Mammary epithelial cell (primary cell): ENCODE measurements at regions of chr1 and their contacts with region 1.

Region 1: GRCh38 chr1:210099921-210100320 is 132.7 kb upstream of the SERTAD4 start:
- DNase-seq: no peak
- H3K4me3 ChIP-seq: no peak overlapping the region
- H3K27ac ChIP-seq: no peak overlapping the region
- H3K4me1 ChIP-seq: no peaks in the 10 kb centered on the region
- H3K27me3 ChIP-seq: no peaks in the 10 kb centered on the region
- CTCF ChIP-seq: no peak

Region 2: DNA sequence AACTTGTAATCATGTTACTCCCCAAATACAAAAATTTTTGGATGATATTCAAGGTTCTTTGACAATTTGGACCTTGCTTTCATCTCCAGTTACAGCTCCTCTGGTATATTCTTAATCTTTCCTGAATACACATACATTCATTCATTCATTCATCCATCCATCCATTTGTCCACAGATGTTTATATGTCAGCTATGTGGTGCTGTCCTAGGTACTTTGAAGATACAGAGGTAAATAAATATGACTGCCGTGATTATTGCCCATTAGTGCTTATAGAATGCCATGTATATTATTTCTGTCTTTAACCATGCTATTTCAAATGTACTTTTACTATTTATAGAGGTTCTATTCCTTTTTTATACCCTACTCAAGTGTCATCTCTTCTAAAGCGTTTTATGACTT is 89.8 kb before region 1 on chr1:
- CTCF ChIA-PET with region 1: no interaction called
- dilution Hi-C with region 1: loop called (anchors 5 kb)
- in situ Hi-C with region 1: no loop called
- intact Hi-C with region 1: no loop called
- DNase-seq: no peak
- H3K4me3 ChIP-seq: no peak overlapping the region
- H3K27ac ChIP-seq: no peak overlapping the region
- H3K4me1 ChIP-seq: no peaks in the 10 kb centered on the region
- H3K27me3 ChIP-seq: no peaks in the 10 kb centered on the region
- CTCF ChIP-seq: no peak